GM12878 (cell line): ENCODE measurements at regions of chr10 and their contacts with region 1.

Region 1: DNA sequence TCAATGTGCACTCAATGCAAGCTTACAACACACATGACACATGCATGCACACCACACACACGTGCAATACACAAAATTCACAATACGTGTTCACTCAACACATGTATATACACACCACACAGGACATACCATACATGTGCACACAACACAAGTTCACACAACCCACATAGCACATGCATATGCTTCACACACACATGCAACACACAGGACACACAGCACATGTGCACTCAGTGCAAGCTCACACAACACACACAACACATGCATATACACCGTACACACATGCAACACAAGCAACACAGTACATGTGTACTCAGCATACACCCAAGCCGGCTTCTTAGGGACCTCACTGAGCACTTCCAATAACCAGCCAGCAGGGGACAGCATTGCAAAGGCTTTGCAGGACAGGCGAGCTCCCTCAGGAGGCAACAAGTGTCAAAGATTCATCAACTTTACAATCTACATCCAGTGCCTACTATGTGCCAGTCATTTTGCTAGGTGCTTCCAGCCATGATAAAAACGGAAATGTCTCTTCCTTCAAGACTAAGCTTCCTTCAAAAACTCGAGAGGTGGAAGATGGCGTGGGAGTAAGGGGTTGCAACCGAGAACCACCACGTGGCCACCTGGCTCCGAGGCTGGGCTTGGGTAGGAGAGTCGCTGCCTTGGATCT is 61.1 kb downstream of the JCAD start:
- DNase-seq: peak; percentile 30
- ATAC-seq: peak; percentile 93
- H3K4me3 ChIP-seq: no peak overlapping the region
- H3K27ac ChIP-seq: no peak overlapping the region
- H3K4me1 ChIP-seq: no peaks in the 10 kb centered on the region
- H3K27me3 ChIP-seq: peaks cover 0 to 1% of the 10 kb centered on the region in 2 experiments; a peak in 2 of 4 replicates
- CTCF ChIP-seq: peak; percentile 99 to 100 (median 99); a peak in 5 of 6 replicates
- EP300 ChIP-seq: no peak
- POLR2A ChIP-seq: no peak
- RAD21 ChIP-seq: peak; percentile 99

Region 2: GRCh38 chr10:30241422-30242110 is 243.3 kb after region 1 on chr10:
- CTCF ChIA-PET with region 1: interaction called, 68 read pairs
- POLR2A ChIA-PET with region 1: no interaction called
- RAD21 ChIA-PET with region 1: interaction called, 10 read pairs
- SMC1A ChIA-PET with region 1: interaction called, 6 read pairs
- in situ Hi-C with region 1: loop called (anchors 25 kb)
- intact Hi-C with region 1: loop called (anchors 1 kb)
- DNase-seq: no peak
- ATAC-seq: peak; percentile 57
- H3K4me3 ChIP-seq: no peak overlapping the region
- H3K27ac ChIP-seq: no peak overlapping the region
- H3K4me1 ChIP-seq: no peaks in the 10 kb centered on the region
- H3K27me3 ChIP-seq: no peaks in the 10 kb centered on the region
- CTCF ChIP-seq: no peak
- EP300 ChIP-seq: no peak
- POLR2A ChIP-seq: no peak
- RAD21 ChIP-seq: no peak

Region 3: GRCh38 chr10:30247704-30248103 is 249.4 kb after region 1 on chr10:
- CTCF ChIA-PET with region 1: interaction called, 68 read pairs
- POLR2A ChIA-PET with region 1: no interaction called
- RAD21 ChIA-PET with region 1: no interaction called
- SMC1A ChIA-PET with region 1: no interaction called
- in situ Hi-C with region 1: loop called (anchors 25 kb)
- intact Hi-C with region 1: no loop called
- DNase-seq: no peak
- ATAC-seq: peak; percentile 75
- H3K4me3 ChIP-seq: no peak overlapping the region
- H3K27ac ChIP-seq: no peak overlapping the region
- H3K4me1 ChIP-seq: no peaks in the 10 kb centered on the region
- H3K27me3 ChIP-seq: no peaks in the 10 kb centered on the region
- CTCF ChIP-seq: no peak
- EP300 ChIP-seq: no peak
- POLR2A ChIP-seq: no peak
- RAD21 ChIP-seq: no peak

Region 4: DNA sequence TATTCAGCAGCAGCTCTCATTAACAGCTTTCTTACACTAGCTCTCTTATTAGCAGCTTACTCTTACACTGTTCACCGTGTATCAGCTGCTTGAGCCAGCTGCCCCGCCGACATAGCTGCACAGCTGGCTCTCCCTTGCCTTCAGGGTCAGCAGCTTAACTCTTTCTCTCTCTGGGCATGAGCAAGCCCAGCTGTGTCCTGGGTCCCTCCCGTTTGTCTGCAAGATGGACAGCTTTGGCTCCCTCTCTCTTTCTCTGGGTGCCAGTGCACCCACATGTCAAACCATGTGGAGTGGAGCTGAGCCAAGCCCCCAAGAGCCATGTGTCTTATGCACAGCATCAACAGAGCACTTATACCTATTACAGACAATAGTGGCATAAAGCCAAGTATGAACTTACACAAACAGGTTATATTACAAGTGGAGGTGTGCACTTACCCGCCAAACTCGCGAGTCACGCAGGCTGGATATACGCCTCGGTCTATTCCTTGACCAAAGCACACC is 386.5 kb after region 1 on chr10:
- CTCF ChIA-PET with region 1: interaction called, 11 read pairs
- POLR2A ChIA-PET with region 1: no interaction called
- RAD21 ChIA-PET with region 1: interaction called, 15 read pairs
- SMC1A ChIA-PET with region 1: interaction called, 6 read pairs
- in situ Hi-C with region 1: no loop called
- intact Hi-C with region 1: no loop called
- DNase-seq: no peak
- ATAC-seq: peak; percentile 89
- H3K4me3 ChIP-seq: no peak overlapping the region
- H3K27ac ChIP-seq: no peak overlapping the region
- H3K4me1 ChIP-seq: no peaks in the 10 kb centered on the region
- H3K27me3 ChIP-seq: no peaks in the 10 kb centered on the region; a peak in 2 of 4 replicates
- CTCF ChIP-seq: peak; percentile 43 to 54 (median 48); a peak in 5 of 6 replicates
- EP300 ChIP-seq: no peak
- POLR2A ChIP-seq: no peak
- RAD21 ChIP-seq: no peak; the same call in 1 of the 2 replicates